Naive thymus-derived CD8-positive, alpha-beta T cell (primary cell): ENCODE measurements at regions of chrX and their contacts with region 1.

Region 1: GRCh38 chrX:53071604-53072417 is 10.4 kb upstream of the TSPYL2 start:
- DNase-seq: peak; percentile 35 to 86 (median 73)
- ATAC-seq: peak; percentile 87 to 91
- H3K4me3 Mint-ChIP-seq: peak overlapping the region; percentile 85 to 94 (median 88)
- H3K27ac Mint-ChIP-seq: peak overlapping the region; percentile 80 to 98 (median 94)
- H3K4me1 Mint-ChIP-seq: peaks cover 6 to 21% (median 14%) of the 10 kb centered on the region in 4 donors
- H3K27me3 Mint-ChIP-seq: no peaks in the 10 kb centered on the region

Region 2: GRCh38 chrX:52995135-52996020 is 76.4 kb before region 1 on chrX:
- POLR2A ChIA-PET with region 1: no interaction called
- DNase-seq: peak; percentile 73 to 95 (median 90)
- ATAC-seq: peak; percentile 97
- H3K4me3 Mint-ChIP-seq: peak overlapping the region; percentile 88 to 99 (median 94)
- H3K27ac Mint-ChIP-seq: peak overlapping the region; percentile 95 to 100 (median 98)
- H3K4me1 Mint-ChIP-seq: peaks cover 9 to 30% (median 26%) of the 10 kb centered on the region in 4 donors
- H3K27me3 Mint-ChIP-seq: no peaks in the 10 kb centered on the region

Region 3: GRCh38 chrX:53081925-53082772 is 10.3 kb after region 1 on chrX and contains the start of gene TSPYL2:
- POLR2A ChIA-PET with region 1: interaction called, 49 read pairs
- DNase-seq: peak; percentile 82 to 97 (median 93)
- ATAC-seq: peak; percentile 83 to 84
- H3K4me3 Mint-ChIP-seq: peak within 1 kb of the TSS; percentile 82 to 96 (median 91)
- H3K27ac Mint-ChIP-seq: peak within 1 kb of the TSS; percentile 95 to 98 (median 98)
- H3K4me1 Mint-ChIP-seq: peaks cover 20 to 50% (median 44%) of the 10 kb centered on the region in 4 donors
- H3K27me3 Mint-ChIP-seq: peaks cover 0 to 3% (median 0%) of the 10 kb centered on the region in 5 donors
- polyA plus RNA-seq, gene TSPYL2: 12.7 to 32.2 (median 27.1) TPM

Region 4: GRCh38 chrX:53088136-53088974 is 16.5 kb after region 1 on chrX:
- POLR2A ChIA-PET with region 1: interaction called, 49 read pairs
- DNase-seq: peak; percentile 59 to 92 (median 86)
- ATAC-seq: peak; percentile 68 to 70
- H3K4me3 Mint-ChIP-seq: peak overlapping the region; percentile 87 to 99 (median 93)
- H3K27ac Mint-ChIP-seq: peak overlapping the region; percentile 98 to 100 (median 99)
- H3K4me1 Mint-ChIP-seq: peaks cover 25 to 54% (median 51%) of the 10 kb centered on the region in 4 donors
- H3K27me3 Mint-ChIP-seq: no peaks in the 10 kb centered on the region

Region 5: GRCh38 chrX:53195401-53195800 is 123.6 kb after region 1 on chrX:
- POLR2A ChIA-PET with region 1: no interaction called
- DNase-seq: no peak
- ATAC-seq: no peak
- H3K4me3 Mint-ChIP-seq: no peak overlapping the region
- H3K27ac Mint-ChIP-seq: peak overlapping the region in 7 of 10 donors; percentile 5 to 89 (median 68)
- H3K4me1 Mint-ChIP-seq: peaks cover 0 to 2% (median 0%) of the 10 kb centered on the region in 4 donors
- H3K27me3 Mint-ChIP-seq: no peaks in the 10 kb centered on the region